OCI-LY7 (cell line): ENCODE measurements at regions of chr17 and their contacts with region 1.

Region 1: GRCh38 chr17:18093616-18094408 is 6.1 kb downstream of the DRG2 start:
- DNase-seq: peak; percentile 22
- H3K4me3 ChIP-seq: no peak overlapping the region
- H3K27ac ChIP-seq: no peak overlapping the region
- H3K4me1 ChIP-seq: peaks cover 3% of the 10 kb centered on the region
- CTCF ChIP-seq: peak; percentile 70

Region 2: GRCh38 chr17:17911001-17911613 is 182.7 kb before region 1 on chr17:
- CTCF ChIA-PET with region 1: no interaction called
- POLR2A ChIA-PET with region 1: no interaction called
- intact Hi-C with region 1: no loop called
- DNase-seq: no peak
- H3K4me3 ChIP-seq: no peak overlapping the region
- H3K27ac ChIP-seq: no peak overlapping the region
- H3K4me1 ChIP-seq: no peaks in the 10 kb centered on the region
- CTCF ChIP-seq: no peak

Region 3: GRCh38 chr17:18158022-18158600 is 64.3 kb after region 1 on chr17:
- CTCF ChIA-PET with region 1: no interaction called
- POLR2A ChIA-PET with region 1: no interaction called
- intact Hi-C with region 1: loop called (anchors 10 kb)
- DNase-seq: peak; percentile 92
- H3K4me3 ChIP-seq: peak overlapping the region; percentile 58
- H3K27ac ChIP-seq: no peak overlapping the region
- H3K4me1 ChIP-seq: peaks cover 32% of the 10 kb centered on the region
- CTCF ChIP-seq: no peak